ENCODE measurements at regions of chr5 and their contacts with region 1.

Region 1: GRCh38 chr5:65481635-65482295 is at the start of gene ADAMTS6:
- DNase-seq: peak; percentile 74 to 97
- H3K4me3 ChIP-seq: peak within 1 kb of the TSS; percentile 61 to 69
- H3K27ac ChIP-seq: peak within 1 kb of the TSS; percentile 92
- H3K4me1 ChIP-seq: peaks cover 0 to 3% of the 10 kb centered on the region in 2 donors
- H3K27me3 ChIP-seq: no peaks in the 10 kb centered on the region
- CTCF ChIP-seq: no peak
- total RNA-seq, gene ADAMTS6: 8.9 TPM

Region 2: GRCh38 chr5:64811050-64811640 is 670.6 kb before region 1 on chr5:
- intact Hi-C with region 1: loop called (anchors 2 kb)
- DNase-seq: no peak
- H3K4me3 ChIP-seq: no peak overlapping the region
- H3K27ac ChIP-seq: no peak overlapping the region
- H3K4me1 ChIP-seq: no peaks in the 10 kb centered on the region
- H3K27me3 ChIP-seq: no peaks in the 10 kb centered on the region
- CTCF ChIP-seq: peak; percentile 28 to 67 (median 43)

Region 3: GRCh38 chr5:64838376-64838775 is 643.4 kb before region 1 on chr5:
- intact Hi-C with region 1: no loop called
- DNase-seq: no peak
- H3K4me3 ChIP-seq: no peak overlapping the region
- H3K27ac ChIP-seq: no peak overlapping the region
- H3K4me1 ChIP-seq: no peaks in the 10 kb centered on the region
- H3K27me3 ChIP-seq: no peaks in the 10 kb centered on the region
- CTCF ChIP-seq: no peak

Region 4: DNA sequence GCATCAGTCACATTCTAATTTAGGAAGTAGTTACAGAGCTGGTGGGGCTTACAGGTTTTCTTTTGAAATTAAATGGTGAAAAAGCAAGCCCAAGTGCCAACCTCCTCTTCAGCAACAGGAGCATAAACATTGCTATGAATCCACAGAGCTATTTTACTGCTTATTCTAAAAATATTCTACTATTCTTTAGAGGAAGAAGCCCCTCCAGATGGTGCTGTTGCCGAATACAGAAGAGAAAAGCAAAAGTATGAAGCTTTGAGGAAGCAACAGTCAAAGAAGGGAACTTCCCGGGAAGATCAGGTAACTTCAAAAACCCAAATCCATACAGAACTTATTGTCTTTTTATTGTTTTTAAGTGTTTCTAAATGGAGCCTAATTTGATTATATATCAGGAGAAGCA is 510.3 kb before region 1 on chr5:
- intact Hi-C with region 1: loop called (anchors 5 kb)
- DNase-seq: no peak
- H3K4me3 ChIP-seq: no peak overlapping the region
- H3K27ac ChIP-seq: peak overlapping the region in 1 of 2 donors; percentile 46
- H3K4me1 ChIP-seq: peaks cover 3% of the 10 kb centered on the region in 2 donors
- H3K27me3 ChIP-seq: no peaks in the 10 kb centered on the region
- CTCF ChIP-seq: peak in 1 of 3 experiments; percentile 34

Region 5: GRCh38 chr5:65086234-65086890 is 395.4 kb before region 1 on chr5:
- intact Hi-C with region 1: no loop called
- DNase-seq: no peak
- H3K4me3 ChIP-seq: no peak overlapping the region
- H3K27ac ChIP-seq: no peak overlapping the region
- H3K4me1 ChIP-seq: no peaks in the 10 kb centered on the region
- H3K27me3 ChIP-seq: no peaks in the 10 kb centered on the region
- CTCF ChIP-seq: no peak

Region 6: GRCh38 chr5:65102828-65103711 is 378.7 kb before region 1 on chr5:
- intact Hi-C with region 1: loop called (anchors 1 kb)
- DNase-seq: peak in 1 of 2 donors; percentile 69
- H3K4me3 ChIP-seq: peak overlapping the region; percentile 69 to 84
- H3K27ac ChIP-seq: peak overlapping the region; percentile 66 to 77
- H3K4me1 ChIP-seq: peaks cover 0 to 3% of the 10 kb centered on the region in 2 donors
- H3K27me3 ChIP-seq: no peaks in the 10 kb centered on the region
- CTCF ChIP-seq: peak in 1 of 3 experiments; percentile 48

Region 7: DNA sequence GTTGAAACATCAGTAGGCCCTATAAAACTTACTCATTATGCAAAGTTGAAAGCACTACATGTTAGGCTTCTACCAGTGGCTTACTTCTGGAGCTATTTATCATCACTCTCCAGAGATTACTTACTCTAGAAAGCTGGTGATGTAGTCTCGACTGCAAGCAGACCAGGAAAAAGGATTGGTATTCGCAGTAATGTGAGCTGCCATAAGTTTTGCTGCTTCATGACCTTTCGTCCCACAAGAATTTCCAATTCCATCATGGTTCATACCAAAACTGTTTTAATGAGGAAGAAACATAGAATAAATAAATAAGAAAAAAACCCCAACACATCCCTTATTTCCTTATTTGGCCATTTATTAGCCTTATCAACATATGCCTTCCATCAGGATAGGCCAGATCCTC is 181.9 kb before region 1 on chr5:
- intact Hi-C with region 1: loop called (anchors 10 kb)
- DNase-seq: no peak
- H3K4me3 ChIP-seq: no peak overlapping the region
- H3K27ac ChIP-seq: no peak overlapping the region
- H3K4me1 ChIP-seq: no peaks in the 10 kb centered on the region
- H3K27me3 ChIP-seq: no peaks in the 10 kb centered on the region
- CTCF ChIP-seq: no peak

Region 8: GRCh38 chr5:65394087-65394486 is 87.7 kb before region 1 on chr5:
- intact Hi-C with region 1: loop called (anchors 5 kb)
- DNase-seq: peak in 1 of 2 donors; percentile 81
- H3K4me3 ChIP-seq: no peak overlapping the region
- H3K27ac ChIP-seq: peak overlapping the region; percentile 59 to 66
- H3K4me1 ChIP-seq: peaks cover 3 to 11% of the 10 kb centered on the region in 2 donors
- H3K27me3 ChIP-seq: no peaks in the 10 kb centered on the region
- CTCF ChIP-seq: no peak

Region 9: DNA sequence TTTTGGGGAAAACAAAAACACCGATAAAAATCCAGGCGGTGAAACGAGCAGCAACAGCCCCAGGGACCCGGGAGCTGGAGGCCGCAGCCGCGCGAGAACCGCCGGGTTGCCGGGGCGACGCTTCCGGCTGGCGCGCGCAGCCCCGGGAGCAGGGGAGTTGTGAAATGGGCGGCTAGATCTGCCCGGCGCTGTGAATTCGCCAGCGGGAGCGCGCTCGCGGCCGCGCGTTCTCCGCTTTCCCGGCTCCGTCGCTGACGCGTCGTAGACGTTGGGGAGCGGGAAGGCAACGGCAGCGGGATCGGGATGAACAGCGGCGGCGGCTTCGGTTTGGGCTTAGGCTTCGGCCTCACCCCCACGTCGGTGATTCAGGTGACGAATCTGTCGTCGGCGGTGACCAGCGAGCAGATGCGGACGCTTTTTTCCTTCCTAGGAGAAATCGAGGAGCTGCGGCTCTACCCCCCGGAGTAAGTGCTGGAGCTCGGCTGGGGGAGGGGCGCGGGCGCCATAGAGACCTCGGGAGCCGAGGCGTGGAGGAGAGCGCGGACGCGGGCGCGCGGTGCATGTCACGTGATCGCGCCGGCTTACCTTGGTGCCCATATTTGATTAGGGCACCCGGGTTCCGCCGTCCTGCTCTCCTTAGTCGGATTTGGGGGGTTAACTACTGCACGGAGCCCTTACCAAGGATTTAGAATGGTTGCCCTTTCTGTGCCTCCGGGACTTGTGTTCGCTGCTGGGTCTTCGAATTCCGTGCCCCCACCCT is 662.5 kb after region 1 on chr5 and contains the start of gene SREK1:
- intact Hi-C with region 1: loop called (anchors 5 kb)
- DNase-seq: peak; percentile 65 to 94
- H3K4me3 ChIP-seq: peak within 1 kb of the TSS; percentile 89 to 92
- H3K27ac ChIP-seq: peak within 1 kb of the TSS; percentile 98 to 100
- H3K4me1 ChIP-seq: peaks cover 0 to 11% of the 10 kb centered on the region in 2 donors
- H3K27me3 ChIP-seq: no peaks in the 10 kb centered on the region
- CTCF ChIP-seq: no peak
- total RNA-seq, gene SREK1: 31.6 TPM

Measured in ascending aorta (tissue), 2 donors.